ENCODE measurements at regions of chr6 and their contacts with region 1.

Region 1: GRCh38 chr6:129672881-129673643 is 36.9 kb downstream of the ARHGAP18 start:
- DNase-seq: peak; percentile 43
- H3K4me3 Mint-ChIP-seq: peak overlapping the region; percentile 48
- H3K27ac Mint-ChIP-seq: peak overlapping the region; percentile 94
- H3K4me1 Mint-ChIP-seq: peaks cover 53% of the 10 kb centered on the region
- H3K27me3 Mint-ChIP-seq: no peaks in the 10 kb centered on the region

Region 2: DNA sequence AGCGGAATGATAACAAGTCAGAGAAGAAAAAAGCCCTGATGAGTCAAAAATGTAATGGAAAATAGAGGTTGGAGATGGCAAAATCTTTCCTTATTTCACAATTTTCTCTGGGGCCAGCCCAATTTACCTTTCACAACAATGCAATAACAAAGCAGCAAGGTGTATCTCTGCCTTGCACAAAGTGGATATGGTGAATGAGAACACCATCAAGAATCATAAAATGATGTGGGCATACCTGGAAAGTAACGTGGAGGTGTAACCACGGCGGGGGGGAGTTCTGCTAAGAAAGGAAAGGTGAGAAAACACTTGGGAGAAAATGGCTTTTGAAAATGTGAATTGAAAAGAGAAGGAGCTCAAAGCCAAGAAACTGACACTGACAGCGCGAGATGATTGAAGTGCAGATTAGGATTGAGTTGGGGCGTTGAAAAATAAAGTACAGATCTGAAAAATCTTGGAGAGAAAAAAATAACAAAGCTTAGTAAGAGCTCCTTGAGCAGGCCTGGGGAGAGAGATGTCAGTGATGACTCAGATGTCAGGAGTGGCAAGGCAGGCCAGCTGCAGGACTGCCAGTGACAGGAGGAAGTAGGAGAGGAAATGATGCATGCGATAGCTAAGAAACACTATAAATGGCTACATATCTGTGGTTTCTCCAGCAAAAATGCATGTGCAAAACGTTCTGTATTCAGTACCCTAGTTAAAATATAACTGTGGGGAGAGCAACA is 10.7 kb after region 1 on chr6:
- CTCF ChIA-PET with region 1: interaction called, 18 read pairs
- POLR2A ChIA-PET with region 1: interaction called, 3 read pairs
- DNase-seq: peak; percentile 69
- H3K4me3 Mint-ChIP-seq: peak overlapping the region; percentile 48
- H3K27ac Mint-ChIP-seq: peak overlapping the region; percentile 86
- H3K4me1 Mint-ChIP-seq: peaks cover 57% of the 10 kb centered on the region
- H3K27me3 Mint-ChIP-seq: no peaks in the 10 kb centered on the region

Measured in activated CD4-positive, alpha-beta T cell treated with anti-CD3 and anti-CD28 coated beads, Interleukin-2, amount 10 ng/mL, durations not matched to agents 7 days and 5 days (primary cell).